Vagina (tissue), 2 donors: ENCODE measurements at regions of chr9 and their contacts with region 1.

Region 1: DNA sequence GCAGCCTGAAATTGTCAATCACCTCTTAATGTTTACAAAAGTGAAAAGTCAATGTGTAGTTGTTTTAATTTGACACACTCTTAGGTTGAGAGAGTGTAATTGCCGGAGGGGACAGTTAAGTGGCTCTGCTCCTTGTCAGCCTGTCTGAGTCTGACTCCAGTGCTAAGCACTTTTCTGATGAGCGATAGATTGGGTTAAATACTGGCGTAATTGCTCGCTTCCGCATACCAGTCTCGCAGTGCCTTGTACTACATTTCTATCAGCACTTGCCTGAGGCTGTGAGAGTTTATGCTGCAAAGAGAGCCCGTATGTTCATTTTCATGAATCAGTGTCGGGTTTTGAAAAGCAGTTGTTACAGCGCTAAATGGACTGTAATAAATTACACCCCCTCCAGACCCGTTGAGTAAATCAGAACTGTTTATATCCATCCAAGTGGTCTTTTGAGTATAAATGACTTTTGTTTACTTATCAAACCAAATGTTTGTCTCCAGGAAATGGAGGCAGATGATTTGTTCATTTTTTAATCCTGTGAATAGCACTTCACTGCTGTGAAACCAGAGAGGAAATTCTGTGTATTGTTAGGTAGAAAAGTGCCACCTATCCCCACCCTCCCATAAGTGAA is 41.0 kb upstream of the DMRT3 start:
- DNase-seq: no peak
- H3K4me3 ChIP-seq: no peak overlapping the region
- H3K27ac ChIP-seq: no peak overlapping the region
- H3K4me1 ChIP-seq: no peaks in the 10 kb centered on the region
- H3K27me3 ChIP-seq: no peaks in the 10 kb centered on the region
- CTCF ChIP-seq: no peak
- POLR2A ChIP-seq: no peak

Region 2: GRCh38 chr9:693201-694091 is 242.0 kb before region 1 on chr9:
- intact Hi-C with region 1: no loop called
- DNase-seq: no peak
- H3K4me3 ChIP-seq: peak overlapping the region; percentile 20 to 40
- H3K27ac ChIP-seq: peak overlapping the region; percentile 88
- H3K4me1 ChIP-seq: peaks cover 91% of the 10 kb centered on the region
- H3K27me3 ChIP-seq: no peaks in the 10 kb centered on the region
- CTCF ChIP-seq: peak in 1 of 3 experiments; percentile 14
- POLR2A ChIP-seq: no peak

Region 3: GRCh38 chr9:784202-784601 is 151.3 kb before region 1 on chr9:
- intact Hi-C with region 1: no loop called
- DNase-seq: no peak
- H3K4me3 ChIP-seq: no peak overlapping the region
- H3K27ac ChIP-seq: no peak overlapping the region
- H3K4me1 ChIP-seq: no peaks in the 10 kb centered on the region
- H3K27me3 ChIP-seq: no peaks in the 10 kb centered on the region
- CTCF ChIP-seq: no peak
- POLR2A ChIP-seq: no peak

Region 4: GRCh38 chr9:875119-875962 is 60.1 kb before region 1 on chr9:
- intact Hi-C with region 1: loop called (anchors 10 kb)
- DNase-seq: no peak
- H3K4me3 ChIP-seq: no peak overlapping the region
- H3K27ac ChIP-seq: no peak overlapping the region
- H3K4me1 ChIP-seq: no peaks in the 10 kb centered on the region
- H3K27me3 ChIP-seq: no peaks in the 10 kb centered on the region
- CTCF ChIP-seq: no peak
- POLR2A ChIP-seq: no peak